Common myeloid progenitor, CD34-positive (primary cell): ENCODE measurements at regions of chr2 and their contacts with region 1.

Region 1: GRCh38 chr2:118046634-118047210 is 32.9 kb upstream of the CCDC93 start:
- DNase-seq: peak; percentile 46 to 69 (median 68)
- H3K4me3 ChIP-seq: no peak overlapping the region
- H3K27ac ChIP-seq: no peak overlapping the region
- H3K4me1 ChIP-seq: peaks cover 0 to 18% (median 10%) of the 10 kb centered on the region in 4 experiments
- H3K27me3 ChIP-seq: peaks cover 0 to 5% (median 0%) of the 10 kb centered on the region in 5 experiments

Region 2: GRCh38 chr2:117997872-117998454 is 48.8 kb before region 1 on chr2:
- CTCF ChIA-PET with region 1: no interaction called
- POLR2A ChIA-PET with region 1: no interaction called
- DNase-seq: no peak
- H3K4me3 ChIP-seq: no peak overlapping the region
- H3K27ac ChIP-seq: no peak overlapping the region
- H3K4me1 ChIP-seq: no peaks in the 10 kb centered on the region
- H3K27me3 ChIP-seq: no peaks in the 10 kb centered on the region

Region 3: DNA sequence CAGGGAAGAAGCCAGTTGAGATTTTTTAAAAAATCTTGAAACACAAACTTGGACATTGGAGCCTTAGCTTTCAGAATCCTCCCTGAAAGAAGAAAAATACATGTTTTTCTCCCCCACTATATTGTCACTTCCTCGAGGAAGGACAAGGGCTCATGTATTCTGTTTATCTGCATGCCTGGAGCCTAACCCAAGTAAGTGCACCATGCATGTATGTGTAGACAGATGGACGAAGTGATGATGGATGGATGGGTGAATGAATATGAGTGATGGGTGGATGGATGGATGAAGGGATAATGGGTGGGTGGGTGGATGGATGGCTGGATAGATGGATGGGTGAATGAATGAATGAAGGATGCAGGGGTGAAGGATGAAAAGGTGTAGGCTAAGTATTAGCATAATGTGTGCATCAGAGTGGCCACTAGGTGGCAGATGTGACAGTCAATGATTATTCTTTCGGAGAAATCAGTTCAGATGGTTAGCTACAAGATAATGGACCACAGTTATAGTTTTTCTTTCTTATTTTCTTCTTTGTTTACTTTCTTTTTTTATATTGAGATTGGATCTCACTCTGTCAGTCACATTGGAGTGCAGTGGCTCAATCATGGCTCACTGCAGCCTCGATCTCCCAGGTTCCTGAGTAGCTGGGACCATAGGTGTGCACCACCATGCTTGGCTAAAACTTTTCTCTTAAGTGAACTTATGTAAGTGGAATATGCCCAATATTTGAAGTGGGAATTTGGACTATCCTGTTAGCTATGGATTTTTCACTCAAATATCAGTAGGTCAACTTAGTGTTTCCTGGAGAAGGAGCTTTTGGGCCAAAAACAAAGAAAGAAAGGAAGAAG is 14.3 kb before region 1 on chr2:
- CTCF ChIA-PET with region 1: interaction called, 10 read pairs
- POLR2A ChIA-PET with region 1: no interaction called
- DNase-seq: peak; percentile 31 to 68 (median 63)
- H3K4me3 ChIP-seq: no peak overlapping the region
- H3K27ac ChIP-seq: no peak overlapping the region
- H3K4me1 ChIP-seq: no peaks in the 10 kb centered on the region
- H3K27me3 ChIP-seq: peaks cover 0 to 12% (median 6%) of the 10 kb centered on the region in 5 experiments

Region 4: DNA sequence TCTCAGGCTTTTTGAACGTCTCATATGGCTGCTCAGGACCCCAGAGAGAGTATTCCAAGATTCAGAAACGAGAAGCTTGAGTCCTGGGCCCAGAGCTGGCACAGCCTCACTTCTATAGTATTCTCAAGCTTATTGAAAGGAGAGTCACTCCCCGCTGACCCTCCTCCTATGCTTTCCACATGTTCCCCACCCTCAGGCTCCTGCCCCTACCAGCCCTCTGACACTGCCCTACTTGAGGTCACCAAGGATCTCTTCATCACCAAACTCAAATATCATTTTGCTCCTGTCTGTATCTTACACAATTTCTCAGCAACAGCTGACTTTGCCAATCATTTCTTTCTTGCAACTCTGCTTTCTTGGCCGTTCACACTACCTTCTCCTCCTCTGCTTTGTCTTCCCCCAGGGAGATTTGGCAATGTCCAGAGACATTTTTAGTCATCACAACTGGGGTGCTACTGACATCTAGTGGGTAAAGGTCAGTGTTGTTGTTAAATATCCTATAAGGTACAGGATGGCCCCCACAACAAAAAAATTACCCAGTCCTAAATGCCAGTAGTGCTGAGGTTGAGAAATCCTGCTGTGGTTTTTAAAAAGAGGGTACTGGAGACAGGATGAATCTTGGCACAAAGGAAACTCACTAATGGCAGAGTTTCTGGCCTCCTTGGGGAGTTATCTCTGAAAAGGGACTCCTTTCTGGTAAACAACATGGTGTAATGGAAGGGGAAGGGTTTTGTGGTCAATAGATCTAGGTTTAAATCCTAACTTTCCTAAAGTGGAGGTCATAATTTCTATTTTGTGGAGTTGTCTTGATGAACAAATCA is 14.6 kb after region 1 on chr2:
- CTCF ChIA-PET with region 1: interaction called, 59 read pairs
- POLR2A ChIA-PET with region 1: no interaction called
- DNase-seq: peak; percentile 31 to 46 (median 39)
- H3K4me3 ChIP-seq: no peak overlapping the region
- H3K27ac ChIP-seq: no peak overlapping the region
- H3K4me1 ChIP-seq: peaks cover 6 to 9% (median 6%) of the 10 kb centered on the region in 4 experiments
- H3K27me3 ChIP-seq: no peaks in the 10 kb centered on the region

Region 5: DNA sequence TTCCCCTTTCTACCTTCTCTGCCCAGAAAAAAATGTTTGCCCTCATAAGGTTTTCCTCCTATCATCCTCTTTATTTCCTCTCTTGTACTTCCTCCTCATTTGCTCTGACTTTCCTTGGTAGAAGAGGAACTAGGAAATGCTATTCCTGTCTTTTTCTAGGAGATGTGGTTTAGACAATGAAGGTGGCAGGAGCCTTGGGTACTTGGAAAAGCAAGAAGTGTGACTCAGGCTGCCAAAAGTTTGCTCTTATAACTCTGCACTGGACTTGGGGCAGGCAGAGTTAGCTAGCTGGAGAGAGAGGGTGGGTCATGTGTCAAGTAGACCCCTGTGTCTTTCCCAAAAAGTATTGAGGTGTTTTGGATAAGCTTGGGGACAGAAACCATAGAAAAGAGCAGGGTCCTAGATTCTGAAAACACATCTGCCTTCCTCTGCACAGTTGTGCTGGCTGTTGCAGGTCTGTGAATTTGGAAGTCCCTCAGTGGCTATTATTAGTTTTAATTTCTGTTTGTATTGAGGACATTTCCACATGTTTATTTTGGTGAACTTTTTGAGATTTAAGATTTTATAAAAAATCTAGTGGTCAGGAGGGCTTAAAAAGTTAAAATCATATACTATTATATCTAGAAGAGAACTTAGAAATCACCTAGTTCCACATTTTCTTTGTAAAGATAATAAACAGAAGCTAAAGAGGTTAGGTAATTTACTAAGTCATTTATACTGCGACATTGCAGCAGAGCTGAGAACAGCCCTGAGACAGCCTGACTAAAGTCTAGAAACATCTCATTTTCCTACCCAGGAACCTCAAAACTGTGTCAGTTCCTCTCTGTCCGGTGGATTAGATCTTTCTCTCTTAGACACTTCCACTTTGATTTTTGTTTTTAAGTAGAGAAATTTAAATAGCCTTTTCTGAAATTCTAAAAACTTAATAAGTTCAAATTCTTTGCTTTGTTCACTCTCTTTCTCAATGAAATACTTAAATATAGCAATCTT is 57.5 kb after region 1 on chr2:
- CTCF ChIA-PET with region 1: interaction called, 10 read pairs
- POLR2A ChIA-PET with region 1: no interaction called
- DNase-seq: peak in 2 of 3 donors; percentile 35 to 45
- H3K4me3 ChIP-seq: no peak overlapping the region
- H3K27ac ChIP-seq: no peak overlapping the region
- H3K4me1 ChIP-seq: peaks cover 11 to 40% (median 17%) of the 10 kb centered on the region in 4 experiments
- H3K27me3 ChIP-seq: no peaks in the 10 kb centered on the region

Region 6: GRCh38 chr2:118130385-118130784 is 83.7 kb after region 1 on chr2:
- CTCF ChIA-PET with region 1: no interaction called
- POLR2A ChIA-PET with region 1: no interaction called
- DNase-seq: no peak
- H3K4me3 ChIP-seq: no peak overlapping the region
- H3K27ac ChIP-seq: no peak overlapping the region
- H3K4me1 ChIP-seq: no peaks in the 10 kb centered on the region
- H3K27me3 ChIP-seq: no peaks in the 10 kb centered on the region

Region 7: GRCh38 chr2:118148809-118149208 is 102.1 kb after region 1 on chr2:
- CTCF ChIA-PET with region 1: interaction called, 20 read pairs
- POLR2A ChIA-PET with region 1: no interaction called
- DNase-seq: peak; percentile 25 to 62 (median 61)
- H3K4me3 ChIP-seq: no peak overlapping the region
- H3K27ac ChIP-seq: no peak overlapping the region
- H3K4me1 ChIP-seq: no peaks in the 10 kb centered on the region
- H3K27me3 ChIP-seq: no peaks in the 10 kb centered on the region

Region 8: DNA sequence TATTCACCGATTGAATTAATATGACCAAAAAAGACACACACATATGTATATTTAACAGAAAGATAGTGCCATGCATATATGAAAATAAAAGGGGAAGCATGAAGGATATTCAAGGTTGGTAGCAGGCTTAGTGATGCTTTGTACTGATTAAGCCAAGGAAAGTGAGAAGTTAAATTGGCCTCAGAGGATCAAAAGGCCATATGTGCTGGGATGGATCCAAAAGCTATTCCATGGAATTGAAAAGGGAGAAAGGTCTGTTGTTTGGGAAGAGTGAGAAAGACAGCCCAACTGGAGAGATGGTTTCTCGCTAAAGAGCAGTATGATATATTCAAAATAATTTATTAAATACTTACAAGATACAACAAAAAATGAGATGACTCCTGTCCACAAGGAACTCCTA is 107.5 kb after region 1 on chr2:
- CTCF ChIA-PET with region 1: interaction called, 20 read pairs
- POLR2A ChIA-PET with region 1: no interaction called
- DNase-seq: no peak
- H3K4me3 ChIP-seq: no peak overlapping the region
- H3K27ac ChIP-seq: no peak overlapping the region
- H3K4me1 ChIP-seq: no peaks in the 10 kb centered on the region
- H3K27me3 ChIP-seq: no peaks in the 10 kb centered on the region